Endothelial cell of umbilical vein (primary cell): ENCODE measurements at regions of chr17 and their contacts with region 1.

Region 1: GRCh38 chr17:1331708-1332107 is 52.2 kb downstream of the TRARG1 start:
- DNase-seq: no peak
- H3K4me3 ChIP-seq: no peak overlapping the region
- H3K27ac ChIP-seq: no peak overlapping the region
- H3K4me1 ChIP-seq: no peaks in the 10 kb centered on the region
- H3K27me3 ChIP-seq: no peaks in the 10 kb centered on the region
- CTCF ChIP-seq: no peak
- POLR2A ChIP-seq: no peak

Region 2: GRCh38 chr17:1260086-1260769 is 71.5 kb before region 1 on chr17:
- CTCF ChIA-PET with region 1: interaction called, 33 read pairs
- POLR2A ChIA-PET with region 1: interaction called, 3 read pairs
- dilution Hi-C with region 1: no loop called
- intact Hi-C with region 1: loop called (anchors 1 kb)
- DNase-seq: no peak
- H3K4me3 ChIP-seq: peak overlapping the region in 2 of 3 experiments; percentile 31 to 32
- H3K27ac ChIP-seq: no peak overlapping the region
- H3K4me1 ChIP-seq: no peaks in the 10 kb centered on the region
- H3K27me3 ChIP-seq: peaks cover 2 to 3% of the 10 kb centered on the region in 2 experiments
- CTCF ChIP-seq: no peak
- POLR2A ChIP-seq: no peak

Region 3: GRCh38 chr17:1275962-1276736 is 55.6 kb before region 1 on chr17:
- CTCF ChIA-PET with region 1: interaction called, 22 read pairs
- POLR2A ChIA-PET with region 1: no interaction called
- dilution Hi-C with region 1: no loop called
- intact Hi-C with region 1: loop called (anchors 1 kb)
- DNase-seq: peak; percentile 30
- H3K4me3 ChIP-seq: no peak overlapping the region
- H3K27ac ChIP-seq: no peak overlapping the region
- H3K4me1 ChIP-seq: no peaks in the 10 kb centered on the region
- H3K27me3 ChIP-seq: peaks cover 8 to 11% of the 10 kb centered on the region in 2 experiments
- CTCF ChIP-seq: peak; percentile 50 to 90
- POLR2A ChIP-seq: no peak

Region 4: DNA sequence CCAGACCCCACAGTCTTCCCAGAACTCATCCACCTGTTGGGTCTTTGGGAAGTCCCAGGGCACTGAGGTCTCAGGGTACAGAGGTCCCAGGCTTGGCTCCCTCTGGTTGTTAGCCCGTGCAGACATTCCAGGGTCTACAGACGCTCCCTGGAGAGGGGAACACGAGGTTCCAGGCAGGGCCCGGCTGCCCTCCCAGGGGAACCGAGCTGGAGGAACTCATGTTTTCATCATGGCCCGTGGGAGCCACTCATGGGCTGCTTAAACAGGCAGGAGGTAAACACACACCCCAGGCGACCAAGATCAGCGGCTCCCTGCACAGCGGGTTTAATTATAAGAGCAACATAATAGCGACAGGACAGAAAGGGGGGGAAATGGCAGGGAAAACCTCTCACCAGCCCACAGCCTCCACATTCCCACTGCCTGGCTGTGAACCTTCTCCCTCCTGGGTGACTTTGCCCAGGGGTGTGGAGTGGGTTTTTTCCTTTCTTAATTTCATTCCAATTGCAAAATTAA is 15.8 kb before region 1 on chr17:
- CTCF ChIA-PET with region 1: interaction called, 11 read pairs
- POLR2A ChIA-PET with region 1: no interaction called
- dilution Hi-C with region 1: no loop called
- intact Hi-C with region 1: no loop called
- DNase-seq: no peak
- H3K4me3 ChIP-seq: no peak overlapping the region
- H3K27ac ChIP-seq: no peak overlapping the region
- H3K4me1 ChIP-seq: no peaks in the 10 kb centered on the region
- H3K27me3 ChIP-seq: no peaks in the 10 kb centered on the region
- CTCF ChIP-seq: no peak
- POLR2A ChIP-seq: no peak

Region 5: GRCh38 chr17:1347589-1348323 is 16.0 kb after region 1 on chr17:
- CTCF ChIA-PET with region 1: interaction called, 23 read pairs
- POLR2A ChIA-PET with region 1: no interaction called
- dilution Hi-C with region 1: no loop called
- intact Hi-C with region 1: no loop called
- DNase-seq: peak; percentile 67
- H3K4me3 ChIP-seq: peak overlapping the region in 1 of 3 experiments; percentile 7
- H3K27ac ChIP-seq: peak overlapping the region; percentile 46
- H3K4me1 ChIP-seq: peaks cover 11% of the 10 kb centered on the region
- H3K27me3 ChIP-seq: no peaks in the 10 kb centered on the region
- CTCF ChIP-seq: no peak
- POLR2A ChIP-seq: no peak